Common myeloid progenitor, CD34-positive (primary cell): ENCODE measurements at regions of chr6 and their contacts with region 1.

Region 1: GRCh38 chr6:160992061-160992979 is 751 bp downstream of the MAP3K4 start:
- DNase-seq: peak; percentile 59 to 64 (median 63)
- H3K4me3 ChIP-seq: peak overlapping the region; percentile 79 to 99 (median 93)
- H3K27ac ChIP-seq: peak overlapping the region; percentile 50 to 79
- H3K4me1 ChIP-seq: peaks cover 10 to 20% (median 14%) of the 10 kb centered on the region in 4 experiments
- H3K27me3 ChIP-seq: no peaks in the 10 kb centered on the region

Region 2: DNA sequence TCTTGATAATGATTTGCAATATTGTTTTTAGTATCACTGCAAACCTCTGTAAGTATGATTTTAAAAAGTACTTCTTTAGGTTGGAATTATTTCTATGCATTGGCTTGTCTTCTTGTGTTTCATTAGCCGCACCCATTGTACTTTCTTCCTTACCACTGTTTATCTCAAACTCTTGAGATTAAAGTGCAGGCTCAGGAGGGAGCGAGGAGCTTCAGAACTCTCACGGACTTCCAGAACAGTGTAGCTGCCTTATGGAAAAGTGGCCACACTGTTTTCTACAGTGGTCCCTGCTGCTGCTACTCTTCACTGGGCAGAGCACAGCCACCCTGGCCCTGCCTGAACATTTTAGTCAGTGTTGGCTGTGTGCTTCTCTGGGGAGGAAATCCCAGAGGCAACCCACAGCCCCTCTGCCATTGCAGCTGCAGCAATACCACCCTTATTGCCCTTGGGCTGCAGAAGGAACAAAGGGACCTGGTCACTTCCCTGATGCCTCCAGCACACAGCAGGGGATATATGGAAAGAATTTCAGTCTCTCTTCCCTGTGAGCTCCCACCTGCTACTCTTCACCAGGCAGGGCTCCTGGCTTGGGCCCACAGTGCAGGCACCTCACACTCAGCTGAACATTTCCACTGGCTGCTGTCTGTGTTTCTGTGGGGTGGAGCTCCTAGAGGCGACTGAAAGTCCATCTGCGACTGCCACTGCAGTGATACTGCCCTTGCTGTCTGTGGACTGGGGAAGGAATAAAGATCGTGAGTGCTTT is 92.5 kb before region 1 on chr6:
- CTCF ChIA-PET with region 1: no interaction called
- POLR2A ChIA-PET with region 1: no interaction called
- DNase-seq: no peak
- H3K4me3 ChIP-seq: no peak overlapping the region
- H3K27ac ChIP-seq: no peak overlapping the region
- H3K4me1 ChIP-seq: no peaks in the 10 kb centered on the region
- H3K27me3 ChIP-seq: no peaks in the 10 kb centered on the region

Region 3: DNA sequence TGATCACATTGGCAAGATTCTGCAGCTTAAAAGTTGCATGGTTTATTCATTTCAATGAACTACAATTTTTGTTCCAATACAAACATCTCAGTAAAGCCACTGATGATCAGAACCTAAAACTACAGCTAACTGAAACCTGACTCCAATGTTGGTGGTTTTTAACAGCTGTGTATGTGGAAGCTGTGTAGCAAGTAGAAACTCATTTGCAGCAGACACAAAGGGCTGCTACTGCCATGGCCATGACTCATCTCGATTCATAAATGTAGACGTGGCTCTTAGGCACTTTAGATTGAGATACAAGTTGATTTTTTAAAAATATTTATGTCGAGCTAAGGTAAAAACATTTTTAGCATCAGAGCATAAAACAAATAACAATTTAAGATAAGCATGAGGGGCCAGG is 20.2 kb before region 1 on chr6:
- CTCF ChIA-PET with region 1: no interaction called
- POLR2A ChIA-PET with region 1: no interaction called
- DNase-seq: no peak
- H3K4me3 ChIP-seq: no peak overlapping the region
- H3K27ac ChIP-seq: no peak overlapping the region
- H3K4me1 ChIP-seq: no peaks in the 10 kb centered on the region
- H3K27me3 ChIP-seq: peaks cover 0 to 2% (median 0%) of the 10 kb centered on the region in 5 experiments

Region 4: GRCh38 chr6:161011492-161012480 is 19.5 kb after region 1 on chr6:
- CTCF ChIA-PET with region 1: interaction called, 16 read pairs
- POLR2A ChIA-PET with region 1: no interaction called
- DNase-seq: no peak
- H3K4me3 ChIP-seq: no peak overlapping the region
- H3K27ac ChIP-seq: no peak overlapping the region
- H3K4me1 ChIP-seq: no peaks in the 10 kb centered on the region
- H3K27me3 ChIP-seq: no peaks in the 10 kb centered on the region